Naive thymus-derived CD4-positive, alpha-beta T cell (primary cell): ENCODE measurements at regions of chr7 and their contacts with region 1.

Region 1: DNA sequence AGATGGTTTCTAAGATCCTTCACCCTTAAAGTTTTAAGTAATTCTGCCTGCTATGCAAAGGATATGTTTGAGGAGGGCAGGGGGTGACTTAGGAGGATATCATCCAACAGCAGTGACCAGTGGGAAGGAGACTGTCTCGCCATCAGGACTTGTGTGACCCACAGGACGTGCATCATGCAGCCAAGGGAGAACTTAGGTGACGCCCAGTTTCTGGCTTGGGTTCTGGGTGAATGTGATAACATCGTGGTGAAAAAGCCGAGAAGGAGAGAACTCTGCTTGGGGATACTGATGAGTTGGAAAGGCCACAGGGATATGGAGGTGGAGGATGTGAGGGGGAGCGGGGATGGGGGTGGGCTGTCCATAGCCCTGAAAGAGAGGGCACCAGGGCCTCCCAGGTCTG is 3.8 kb downstream of the WIPI2 start:
- DNase-seq: no peak
- ATAC-seq: no peak
- H3K4me3 ChIP-seq: no peak overlapping the region
- H3K4me3 Mint-ChIP-seq: peak overlapping the region in 1 of 10 donors; percentile 42
- H3K27ac ChIP-seq: no peak overlapping the region
- H3K27ac Mint-ChIP-seq: peak overlapping the region in 2 of 9 donors; percentile 14 to 37
- H3K4me1 ChIP-seq: peaks cover 14 to 19% of the 10 kb centered on the region in 2 donors
- H3K4me1 Mint-ChIP-seq: peaks cover 24 to 54% (median 42%) of the 10 kb centered on the region in 7 donors
- H3K27me3 ChIP-seq: no peaks in the 10 kb centered on the region
- H3K27me3 Mint-ChIP-seq: no peaks in the 10 kb centered on the region

Region 2: DNA sequence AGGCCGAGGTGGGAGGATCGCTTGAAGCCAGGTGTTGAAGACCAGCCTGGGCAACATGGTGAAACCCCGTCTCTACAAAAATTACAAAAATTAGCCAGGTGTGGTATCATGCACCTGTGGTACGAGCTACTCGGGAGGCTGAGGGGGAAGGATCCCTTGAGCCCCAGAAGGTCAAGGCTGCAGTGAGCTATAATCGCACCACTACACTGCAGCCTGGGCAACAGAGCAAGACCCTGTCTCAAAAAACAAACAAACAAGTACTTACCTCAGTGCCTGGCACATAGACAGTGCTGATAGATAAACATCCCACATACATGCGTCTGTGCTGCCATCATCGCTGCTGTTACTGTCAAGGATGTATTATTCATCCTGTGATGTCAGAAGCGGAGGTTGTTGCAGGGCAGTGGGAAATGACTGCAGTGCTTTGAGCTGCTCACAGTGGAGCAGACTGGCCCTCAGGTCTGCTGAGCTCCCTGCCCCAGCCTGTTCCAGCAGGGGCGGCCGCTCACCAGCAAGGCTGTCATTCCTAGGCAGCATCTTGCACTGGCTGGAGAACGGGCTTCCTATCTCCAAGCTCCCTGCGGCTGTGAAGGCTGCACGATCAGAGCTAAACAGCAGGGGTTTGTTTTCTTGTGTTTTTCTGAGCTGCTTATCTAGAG is 493.2 kb before region 1 on chr7:
- CTCF ChIA-PET with region 1: no interaction called
- POLR2A ChIA-PET with region 1: no interaction called
- intact Hi-C with region 1: no loop called
- DNase-seq: no peak
- ATAC-seq: no peak
- H3K4me3 ChIP-seq: no peak overlapping the region
- H3K4me3 Mint-ChIP-seq: no peak overlapping the region
- H3K27ac ChIP-seq: no peak overlapping the region
- H3K27ac Mint-ChIP-seq: peak overlapping the region in 4 of 9 donors; percentile 8 to 80 (median 32)
- H3K4me1 ChIP-seq: peaks cover 0 to 6% of the 10 kb centered on the region in 2 donors
- H3K4me1 Mint-ChIP-seq: peaks cover 6 to 85% (median 54%) of the 10 kb centered on the region in 7 donors
- H3K27me3 ChIP-seq: no peaks in the 10 kb centered on the region
- H3K27me3 Mint-ChIP-seq: no peaks in the 10 kb centered on the region

Region 3: DNA sequence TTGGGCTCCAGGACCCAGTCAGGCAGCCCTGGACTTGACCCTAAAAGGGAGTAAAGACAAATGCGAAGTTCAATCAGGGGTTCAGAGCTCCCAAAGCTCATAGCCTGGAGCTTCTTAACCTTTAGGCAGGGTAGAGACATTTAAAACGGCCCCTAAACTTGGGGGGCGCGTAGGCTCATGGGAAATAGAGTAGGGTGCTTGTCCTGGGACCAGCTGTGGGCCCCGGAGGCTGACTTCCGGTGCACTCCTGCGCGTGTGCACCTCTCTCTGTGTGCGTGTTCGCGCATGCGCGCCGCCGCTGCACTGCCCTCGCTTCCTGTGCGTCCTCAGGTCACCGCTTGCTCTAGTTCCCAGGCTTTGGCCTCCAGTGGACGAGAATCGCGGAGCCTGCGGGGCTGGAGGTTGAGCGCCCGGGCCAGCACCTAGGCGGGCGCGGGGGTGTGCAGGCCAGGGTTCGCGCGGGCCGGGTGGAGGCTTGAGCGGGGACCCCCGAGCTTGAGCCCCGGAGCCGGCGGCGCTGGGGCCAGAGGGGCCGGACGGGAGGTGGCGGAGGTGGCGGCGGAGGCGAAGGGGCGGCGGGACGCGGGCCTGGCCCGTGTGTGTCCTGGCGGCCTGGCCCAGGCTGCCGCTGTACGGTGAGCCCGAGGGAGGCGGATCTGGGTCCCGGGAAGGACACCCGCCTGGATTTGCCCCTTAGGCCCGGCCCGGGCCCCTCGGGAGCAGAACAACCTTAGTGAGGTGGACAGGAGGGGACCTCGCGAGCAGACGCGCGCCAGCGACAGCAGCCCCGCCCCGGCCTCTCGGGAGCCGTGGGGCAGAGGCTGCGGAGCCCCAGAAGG is 148.1 kb before region 1 on chr7 and contains the start of gene RBAK:
- CTCF ChIA-PET with region 1: no interaction called
- POLR2A ChIA-PET with region 1: no interaction called
- intact Hi-C with region 1: loop called in 1 of 2 experiments (anchors 1 kb)
- DNase-seq: peak; percentile 74 to 91 (median 86)
- ATAC-seq: peak; percentile 100
- H3K4me3 ChIP-seq: peak within 1 kb of the TSS; percentile 76
- H3K4me3 Mint-ChIP-seq: peak within 1 kb of the TSS; percentile 92 to 98 (median 96)
- H3K27ac ChIP-seq: peak within 1 kb of the TSS; percentile 95
- H3K27ac Mint-ChIP-seq: peak within 1 kb of the TSS; percentile 82 to 97 (median 92)
- H3K4me1 ChIP-seq: peaks cover 4 to 7% of the 10 kb centered on the region in 2 donors
- H3K4me1 Mint-ChIP-seq: peaks cover 16 to 57% (median 51%) of the 10 kb centered on the region in 7 donors
- H3K27me3 ChIP-seq: no peaks in the 10 kb centered on the region
- H3K27me3 Mint-ChIP-seq: peaks cover 0 to 2% (median 0%) of the 10 kb centered on the region in 5 donors
- total RNA-seq, gene RBAK: 11.8 to 21.8 (median 17.5) TPM

Region 4: GRCh38 chr7:5139998-5140397 is 53.9 kb before region 1 on chr7:
- CTCF ChIA-PET with region 1: no interaction called
- POLR2A ChIA-PET with region 1: interaction called, 3 read pairs
- intact Hi-C with region 1: loop called (anchors 1 to 5 kb)
- DNase-seq: peak in 3 of 9 donors; percentile 10 to 24 (median 14)
- ATAC-seq: no peak
- H3K4me3 ChIP-seq: no peak overlapping the region
- H3K4me3 Mint-ChIP-seq: peak overlapping the region in 2 of 10 donors; percentile 45 to 49
- H3K27ac ChIP-seq: no peak overlapping the region
- H3K27ac Mint-ChIP-seq: peak overlapping the region in 4 of 9 donors; percentile 62 to 85 (median 76)
- H3K4me1 ChIP-seq: peaks cover 4% of the 10 kb centered on the region in 2 donors
- H3K4me1 Mint-ChIP-seq: peaks cover 8 to 44% (median 12%) of the 10 kb centered on the region in 7 donors
- H3K27me3 ChIP-seq: no peaks in the 10 kb centered on the region
- H3K27me3 Mint-ChIP-seq: peaks cover 0 to 7% (median 0%) of the 10 kb centered on the region in 5 donors

Region 5: DNA sequence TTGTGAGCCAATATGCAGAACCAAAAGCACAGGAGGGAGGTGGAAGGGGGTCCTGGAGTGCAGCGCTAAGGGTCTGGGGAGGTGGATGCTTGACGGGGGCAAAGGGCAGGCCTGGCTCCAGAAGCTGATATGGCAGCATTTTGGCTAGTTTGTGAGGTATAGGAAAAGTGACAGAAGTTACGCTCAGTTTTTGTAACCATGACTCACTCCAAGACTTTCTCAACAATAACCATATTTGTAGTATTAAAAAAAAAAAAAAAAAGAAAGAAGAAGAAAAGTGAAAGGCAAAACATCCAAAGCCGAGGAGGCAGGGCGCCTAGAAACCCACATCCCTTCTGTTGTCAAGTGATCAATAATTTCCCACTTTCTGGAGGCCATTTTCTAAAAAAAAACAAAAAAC is 495.2 kb after region 1 on chr7:
- CTCF ChIA-PET with region 1: no interaction called
- POLR2A ChIA-PET with region 1: no interaction called
- intact Hi-C with region 1: loop called in 1 of 2 experiments (anchors 5 kb)
- DNase-seq: peak in 7 of 9 donors; percentile 41 to 80 (median 67)
- ATAC-seq: peak; percentile 43
- H3K4me3 ChIP-seq: peak overlapping the region; percentile 23
- H3K4me3 Mint-ChIP-seq: peak overlapping the region; percentile 60 to 94 (median 74)
- H3K27ac ChIP-seq: peak overlapping the region; percentile 74
- H3K27ac Mint-ChIP-seq: peak overlapping the region; percentile 85 to 98 (median 92)
- H3K4me1 ChIP-seq: peaks cover 20 to 88% of the 10 kb centered on the region in 2 donors
- H3K4me1 Mint-ChIP-seq: peaks cover 69 to 95% (median 83%) of the 10 kb centered on the region in 7 donors
- H3K27me3 ChIP-seq: no peaks in the 10 kb centered on the region
- H3K27me3 Mint-ChIP-seq: peaks cover 0 to 4% (median 0%) of the 10 kb centered on the region in 5 donors